Colonic mucosa (tissue), 4 donors: ENCODE measurements at regions of chr2 and their contacts with region 1.

Region 1: DNA sequence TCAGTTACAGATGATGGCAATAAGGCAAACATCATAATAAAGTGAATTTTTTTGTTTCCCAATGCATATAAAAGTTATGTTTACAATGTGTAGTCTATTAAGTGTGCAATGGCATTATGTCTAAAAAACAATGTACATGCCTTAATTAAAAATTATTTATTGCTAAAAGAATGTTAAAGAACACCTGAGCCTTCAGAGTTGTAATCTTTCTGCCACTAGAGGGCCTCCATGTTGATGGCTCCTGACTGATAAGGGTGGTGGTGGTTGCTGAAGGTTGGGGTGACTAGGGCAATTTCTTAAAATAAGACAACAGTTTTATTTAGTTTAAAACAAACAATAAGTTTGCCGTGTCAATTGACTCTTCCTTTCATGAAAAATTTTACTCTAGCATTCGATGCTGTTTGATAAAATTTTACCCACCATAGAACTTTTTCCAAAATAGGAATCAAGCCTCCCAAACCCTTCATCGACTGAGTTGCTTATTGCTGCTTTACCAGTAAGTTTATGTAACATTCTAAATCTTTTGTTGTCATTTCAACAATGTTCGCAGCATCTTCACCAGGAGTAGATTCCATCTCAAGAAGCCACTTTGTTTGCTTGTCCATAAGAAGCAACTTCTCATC is 32.3 kb downstream of the MAP3K2 start:
- DNase-seq: no peak
- H3K4me3 ChIP-seq: no peak overlapping the region
- H3K27ac ChIP-seq: no peak overlapping the region
- H3K4me1 ChIP-seq: no peaks in the 10 kb centered on the region
- H3K27me3 ChIP-seq: no peaks in the 10 kb centered on the region
- CTCF ChIP-seq: peak; percentile 57

Region 2: DNA sequence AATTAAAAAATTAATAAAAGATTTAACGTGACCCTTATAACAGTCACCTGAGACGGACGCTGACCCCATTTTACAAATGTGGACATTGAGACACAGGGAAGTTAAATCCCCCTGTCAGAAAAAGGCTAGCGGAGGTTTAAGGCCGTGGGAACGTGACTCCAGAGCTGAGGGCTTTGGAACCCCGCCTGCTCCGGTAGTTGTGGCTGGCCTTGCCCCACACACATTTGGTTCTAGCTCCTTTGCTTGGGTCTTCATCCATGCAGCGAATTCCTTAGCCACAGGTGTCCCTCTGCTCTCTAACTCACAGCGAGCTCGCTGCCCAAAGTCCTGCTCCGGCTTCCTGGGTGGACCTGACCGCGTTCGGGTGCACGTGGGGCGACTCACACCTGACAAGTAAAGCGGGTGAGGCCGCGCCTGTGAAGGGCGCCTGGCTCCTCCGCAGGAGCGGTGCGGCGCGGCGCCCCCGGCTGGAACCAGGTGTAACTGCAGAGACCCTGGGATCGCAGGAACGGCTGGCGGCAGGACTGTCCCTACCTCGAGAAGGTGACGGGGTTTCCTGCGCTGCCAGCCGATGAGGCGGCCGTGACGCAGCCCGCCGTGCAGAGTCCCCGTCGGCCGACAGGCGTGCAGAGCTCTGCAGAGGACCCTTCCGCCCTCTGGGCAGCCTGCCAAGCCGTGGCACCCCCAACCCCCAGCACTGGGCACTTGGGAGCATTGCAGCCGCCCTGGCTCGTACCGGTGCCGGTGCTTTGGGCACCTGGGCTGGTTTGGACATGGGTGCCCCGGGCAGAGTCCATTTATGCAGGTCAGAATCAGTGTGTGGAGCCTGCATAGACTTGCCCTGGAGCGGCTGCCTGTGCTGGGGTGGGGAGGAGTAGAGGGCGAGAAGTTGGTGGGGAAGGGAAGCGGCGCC is 60.4 kb after region 1 on chr2:
- intact Hi-C with region 1: loop called (anchors 5 kb)
- DNase-seq: peak; percentile 86
- H3K4me3 ChIP-seq: peak overlapping the region; percentile 55
- H3K27ac ChIP-seq: no peak overlapping the region
- H3K4me1 ChIP-seq: peaks cover 11% of the 10 kb centered on the region
- H3K27me3 ChIP-seq: no peaks in the 10 kb centered on the region
- CTCF ChIP-seq: peak; percentile 87